AG04450 (cell line): ENCODE measurements at regions of chr18 and their contacts with region 1.

Region 1: DNA sequence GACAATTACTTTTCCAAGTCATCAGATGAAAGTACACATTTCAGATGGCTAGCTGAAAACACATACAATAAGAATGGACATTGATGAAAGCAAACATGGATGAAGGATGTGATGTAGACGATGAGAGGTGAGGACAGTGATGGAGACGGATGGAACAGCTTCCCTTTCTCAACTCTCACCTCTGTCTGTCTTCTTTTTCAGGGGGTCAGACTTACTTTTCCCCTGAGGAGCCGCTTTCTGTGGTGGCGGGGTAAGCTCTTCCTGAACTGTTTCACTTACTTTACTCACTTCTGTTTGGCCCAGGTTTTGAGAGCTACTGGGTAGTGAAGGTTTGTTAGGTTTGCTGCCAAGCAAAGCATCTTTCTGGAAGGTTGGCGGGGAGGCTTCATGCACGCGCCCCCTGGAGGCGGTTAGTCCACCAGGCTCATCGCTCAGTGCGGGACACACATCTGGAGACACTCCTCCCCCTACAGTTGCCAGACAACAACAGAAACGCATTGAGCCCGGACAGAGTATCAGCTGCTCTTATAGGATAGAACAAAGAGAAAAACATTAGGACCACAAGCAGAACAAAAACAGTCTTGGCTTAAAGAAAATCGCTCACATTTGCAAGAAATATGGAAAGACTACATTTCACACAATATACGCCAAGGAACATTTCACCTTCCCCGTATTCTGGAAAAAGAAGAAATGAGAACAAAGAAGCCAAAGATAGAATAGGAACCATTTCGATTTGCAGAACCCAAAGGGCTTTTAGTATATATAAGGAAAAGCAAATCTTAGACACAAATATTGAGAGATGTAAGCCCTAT is 90.5 kb downstream of the MYOM1 start:
- DNase-seq: peak; percentile 63
- H3K4me3 ChIP-seq: no peak overlapping the region
- H3K27ac ChIP-seq: no peak overlapping the region
- H3K27me3 ChIP-seq: peaks cover 5% of the 10 kb centered on the region
- CTCF ChIP-seq: peak; percentile 93

Region 2: DNA sequence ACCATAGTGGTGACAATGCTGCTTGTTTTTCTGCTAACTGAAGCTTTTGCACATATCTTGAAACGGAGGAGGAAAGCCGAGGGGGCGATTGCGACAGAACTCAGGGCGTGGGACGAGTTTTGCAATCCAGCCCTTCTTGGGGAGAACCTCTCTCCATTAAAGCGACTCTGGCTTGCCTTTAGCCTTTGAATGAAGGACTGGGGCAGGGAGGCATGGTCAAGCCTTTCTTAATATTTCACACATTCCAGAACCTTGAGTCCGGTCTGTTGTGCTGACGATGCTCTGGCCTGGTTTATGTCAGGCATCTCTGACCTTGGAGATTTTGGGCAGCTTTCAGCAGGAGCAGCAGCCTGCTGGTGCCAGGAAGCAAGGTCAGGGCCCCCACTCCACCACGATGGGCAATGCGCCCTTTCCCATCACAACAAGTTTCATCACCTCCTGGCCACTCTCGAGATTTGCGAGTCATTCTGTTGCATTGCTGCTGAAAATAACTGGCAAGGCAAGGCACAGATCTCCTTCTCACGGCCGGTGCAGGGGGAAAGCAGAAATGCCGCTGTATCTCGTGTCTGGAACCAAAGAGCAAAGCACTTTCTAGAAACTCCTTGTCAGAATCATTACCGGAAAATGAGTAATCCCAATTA is 271.6 kb before region 1 on chr18:
- CTCF ChIA-PET with region 1: no interaction called
- POLR2A ChIA-PET with region 1: no interaction called
- DNase-seq: no peak
- H3K4me3 ChIP-seq: no peak overlapping the region
- H3K27ac ChIP-seq: peak overlapping the region; percentile 31
- H3K27me3 ChIP-seq: peaks cover 19% of the 10 kb centered on the region
- CTCF ChIP-seq: no peak

Region 3: GRCh38 chr18:2932247-2933181 is 196.7 kb before region 1 on chr18:
- CTCF ChIA-PET with region 1: interaction called, 62 read pairs
- POLR2A ChIA-PET with region 1: no interaction called
- DNase-seq: peak; percentile 21
- H3K4me3 ChIP-seq: no peak overlapping the region
- H3K27ac ChIP-seq: no peak overlapping the region
- H3K27me3 ChIP-seq: no peaks in the 10 kb centered on the region
- CTCF ChIP-seq: peak; percentile 64

Region 4: GRCh38 chr18:2985628-2986027 is 143.6 kb before region 1 on chr18:
- CTCF ChIA-PET with region 1: interaction called, 13 read pairs
- POLR2A ChIA-PET with region 1: no interaction called
- DNase-seq: no peak
- H3K4me3 ChIP-seq: no peak overlapping the region
- H3K27ac ChIP-seq: no peak overlapping the region
- H3K27me3 ChIP-seq: no peaks in the 10 kb centered on the region
- CTCF ChIP-seq: peak; percentile 46

Region 5: GRCh38 chr18:3088449-3088848 is 40.8 kb before region 1 on chr18:
- CTCF ChIA-PET with region 1: interaction called, 10 read pairs
- POLR2A ChIA-PET with region 1: no interaction called
- DNase-seq: no peak
- H3K4me3 ChIP-seq: no peak overlapping the region
- H3K27ac ChIP-seq: no peak overlapping the region
- H3K27me3 ChIP-seq: no peaks in the 10 kb centered on the region
- CTCF ChIP-seq: no peak

Region 6: DNA sequence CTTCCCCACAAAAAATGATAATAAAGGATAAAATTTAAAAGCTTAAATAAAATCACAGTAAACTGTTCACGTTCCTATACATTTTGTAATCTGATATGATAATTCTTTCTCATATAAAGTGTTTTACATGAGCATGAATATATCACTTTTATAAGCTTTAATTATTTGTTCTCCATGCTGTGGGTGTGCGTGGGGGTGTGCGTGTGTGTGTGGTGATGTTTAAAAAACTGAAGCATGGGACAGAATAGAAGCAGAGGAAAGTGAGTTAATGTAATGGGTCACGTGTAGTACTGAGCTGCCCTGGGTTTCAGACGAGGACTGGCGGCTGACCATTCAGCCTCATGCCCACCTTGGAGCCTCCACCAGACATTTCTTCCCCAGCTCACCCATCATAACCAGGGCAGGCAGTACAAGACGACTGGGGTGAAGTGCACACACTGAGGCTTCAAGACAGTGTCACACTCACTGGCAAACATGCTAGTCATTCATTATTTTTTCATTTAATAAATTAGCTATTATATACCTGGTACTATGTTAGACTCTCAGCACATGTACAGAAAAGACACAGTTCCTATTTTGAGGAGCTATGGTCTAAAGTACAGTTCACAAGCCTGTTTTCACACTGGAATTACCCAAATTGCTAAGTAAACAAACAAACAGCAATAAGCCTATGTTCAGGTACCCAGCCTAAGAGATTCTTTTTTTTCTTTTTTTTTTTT is 19.1 kb before region 1 on chr18:
- CTCF ChIA-PET with region 1: interaction called, 29 read pairs
- POLR2A ChIA-PET with region 1: no interaction called
- DNase-seq: no peak
- H3K4me3 ChIP-seq: no peak overlapping the region
- H3K27ac ChIP-seq: no peak overlapping the region
- H3K27me3 ChIP-seq: no peaks in the 10 kb centered on the region
- CTCF ChIP-seq: no peak

Region 7: GRCh38 chr18:3151399-3152264 is 22.4 kb after region 1 on chr18:
- CTCF ChIA-PET with region 1: interaction called, 38 read pairs
- POLR2A ChIA-PET with region 1: no interaction called
- DNase-seq: no peak
- H3K4me3 ChIP-seq: no peak overlapping the region
- H3K27ac ChIP-seq: no peak overlapping the region
- H3K27me3 ChIP-seq: peaks cover 3% of the 10 kb centered on the region
- CTCF ChIP-seq: peak; percentile 79